Astrocyte of the cerebellum (primary cell): ENCODE measurements at regions of chr17 and their contacts with region 1.

Region 1: DNA sequence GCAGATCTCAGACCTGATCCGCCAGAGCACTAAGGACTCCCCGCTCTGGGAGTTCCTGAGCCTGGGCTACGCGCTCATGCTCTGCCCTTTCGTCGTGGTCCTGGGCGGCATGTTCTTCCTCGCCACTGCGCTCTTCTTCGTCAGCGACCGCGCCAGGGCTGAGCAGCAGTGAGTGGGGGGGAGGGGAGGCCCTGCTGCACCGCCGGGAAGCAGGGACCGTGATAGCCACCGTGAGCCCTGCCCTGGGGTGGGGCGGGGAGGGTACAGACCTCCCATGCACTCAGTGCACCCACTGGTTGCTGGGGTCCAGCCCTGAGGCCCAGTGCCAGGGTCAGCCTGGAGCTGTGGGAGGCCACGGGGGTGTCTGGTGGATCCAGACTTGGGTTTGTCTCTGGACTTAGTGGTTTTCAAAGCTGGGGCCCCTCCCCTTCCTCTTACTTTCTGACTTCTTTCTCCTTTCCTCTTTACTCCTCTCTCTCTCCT is 18.9 kb downstream of the MYBBP1A start:
- DNase-seq: no peak
- H3K4me3 ChIP-seq: no peak overlapping the region
- CTCF ChIP-seq: no peak

Region 2: DNA sequence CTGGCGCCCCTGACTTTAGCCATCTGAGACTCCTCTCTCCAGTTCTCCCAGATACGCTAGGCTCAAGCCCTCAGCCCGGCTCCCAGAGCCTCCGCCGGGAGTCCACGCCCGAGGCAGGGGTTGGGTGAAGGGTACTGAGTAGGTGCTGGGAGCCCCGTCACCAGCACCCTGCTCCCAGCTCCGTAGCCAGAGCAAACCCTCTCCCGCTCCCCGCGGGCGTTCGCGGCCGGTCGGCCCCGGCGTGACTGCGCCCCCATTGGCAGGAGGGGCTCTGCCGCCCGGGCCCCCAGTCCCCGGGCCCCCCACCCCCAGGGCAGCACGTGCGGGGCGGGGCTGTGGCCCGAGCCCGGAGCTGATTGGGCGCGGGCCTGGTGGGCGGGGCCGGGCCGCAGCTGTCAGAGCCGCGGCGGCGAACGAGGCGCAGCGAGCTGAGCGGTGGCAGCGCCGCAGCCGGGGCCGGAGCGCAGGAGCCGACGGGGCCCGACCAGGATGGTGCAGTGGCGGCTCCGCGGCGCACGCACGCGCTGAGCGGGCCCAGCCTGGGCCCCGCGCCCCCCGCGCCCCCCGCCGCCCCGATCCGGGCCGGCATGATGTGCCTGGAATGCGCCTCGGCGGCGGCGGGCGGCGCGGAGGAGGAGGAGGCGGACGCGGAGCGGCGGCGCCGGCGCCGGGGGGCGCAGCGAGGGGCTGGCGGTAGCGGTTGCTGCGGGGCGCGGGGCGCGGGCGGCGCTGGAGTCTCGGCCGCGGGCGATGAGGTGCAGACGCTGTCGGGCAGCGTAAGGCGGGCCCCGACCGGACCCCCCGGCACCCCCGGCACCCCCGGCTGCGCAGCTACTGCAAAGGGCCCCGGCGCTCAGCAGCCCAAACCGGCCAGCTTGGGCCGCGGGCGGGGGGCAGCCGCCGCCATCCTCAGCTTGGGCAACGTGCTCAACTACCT is 37.6 kb before region 1 on chr17 and contains the start of gene SPNS2:
- in situ Hi-C with region 1: no loop called
- DNase-seq: no peak
- H3K4me3 ChIP-seq: no peak within 1 kb of the TSS
- CTCF ChIP-seq: no peak

Region 3: DNA sequence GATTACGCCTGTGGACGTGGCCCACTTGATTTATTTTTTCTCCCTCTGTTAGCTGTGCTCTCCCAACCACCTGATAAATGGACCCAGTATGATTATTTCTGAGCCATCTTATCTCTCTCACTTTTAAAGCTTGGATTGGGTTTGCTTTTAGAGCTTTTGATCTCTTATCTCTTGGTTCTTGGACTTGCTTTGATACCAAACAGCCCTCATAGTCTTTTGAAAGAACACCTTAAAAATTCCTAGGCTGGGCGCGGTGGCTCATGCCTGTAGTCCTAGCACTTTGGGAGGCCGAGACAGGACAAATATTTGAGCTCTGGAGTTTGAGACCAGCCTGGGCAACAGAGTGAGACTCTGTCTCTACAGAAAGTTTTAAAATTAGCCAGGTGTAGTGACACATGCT is 73.9 kb after region 1 on chr17:
- in situ Hi-C with region 1: loop called (anchors 5 kb)
- DNase-seq: no peak
- H3K4me3 ChIP-seq: no peak overlapping the region
- CTCF ChIP-seq: no peak